ENCODE measurements at regions of chr12 and their contacts with region 1.

Region 1: GRCh38 chr12:106302401-106303201 is at the start of gene TCP11L2:
- DNase-seq: peak; percentile 83
- H3K4me3 Mint-ChIP-seq: peak within 1 kb of the TSS; percentile 93
- H3K27ac Mint-ChIP-seq: peak within 1 kb of the TSS; percentile 100
- H3K4me1 Mint-ChIP-seq: peaks cover 49% of the 10 kb centered on the region
- H3K27me3 Mint-ChIP-seq: no peaks in the 10 kb centered on the region
- total RNA-seq, gene TCP11L2: 4.0 and 4.3 TPM in 2 replicates

Region 2: GRCh38 chr12:105235732-105236476 is 1066.7 kb before region 1 on chr12 and contains the start of gene APPL2:
- intact Hi-C with region 1: loop called (anchors 2 kb)
- DNase-seq: peak; percentile 71
- H3K4me3 Mint-ChIP-seq: peak within 1 kb of the TSS; percentile 91
- H3K27ac Mint-ChIP-seq: peak within 1 kb of the TSS; percentile 77
- H3K4me1 Mint-ChIP-seq: peaks cover 32% of the 10 kb centered on the region
- H3K27me3 Mint-ChIP-seq: peaks cover 3% of the 10 kb centered on the region
- total RNA-seq, gene APPL2: 22.9 and 27.8 TPM in 2 replicates

Region 3: DNA sequence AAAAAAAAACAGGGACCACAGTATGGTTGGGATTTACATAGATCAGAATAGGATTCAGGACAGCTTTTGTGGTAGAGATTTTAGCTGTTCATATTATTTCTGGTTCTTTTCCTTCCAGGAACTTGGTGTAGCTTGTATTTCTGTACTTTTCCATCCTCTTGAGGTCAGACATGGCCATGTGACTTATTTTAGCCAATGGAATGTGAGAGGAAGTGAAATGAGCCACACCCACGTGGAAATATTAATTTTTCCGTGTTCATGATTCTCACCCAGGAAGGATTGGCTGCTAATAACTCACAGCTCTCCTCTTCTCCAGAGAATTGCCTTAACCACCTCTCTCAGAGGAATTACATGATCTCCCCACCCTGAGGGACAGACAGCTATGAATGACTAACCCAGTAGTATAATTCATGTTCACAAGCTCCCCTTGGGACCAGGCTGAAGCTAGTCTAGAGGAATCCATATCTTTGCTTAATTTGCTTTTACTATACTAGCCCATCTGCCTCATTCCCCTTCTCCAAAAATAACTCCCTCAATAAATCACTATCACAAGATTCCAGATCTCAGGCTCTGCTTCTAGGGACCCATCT is 504.2 kb before region 1 on chr12:
- intact Hi-C with region 1: no loop called
- DNase-seq: no peak
- H3K4me3 Mint-ChIP-seq: no peak overlapping the region
- H3K27ac Mint-ChIP-seq: no peak overlapping the region
- H3K4me1 Mint-ChIP-seq: no peaks in the 10 kb centered on the region
- H3K27me3 Mint-ChIP-seq: no peaks in the 10 kb centered on the region

Region 4: GRCh38 chr12:106223485-106224354 is 78.9 kb before region 1 on chr12:
- intact Hi-C with region 1: loop called (anchors 5 kb)
- DNase-seq: peak; percentile 59
- H3K4me3 Mint-ChIP-seq: no peak overlapping the region
- H3K27ac Mint-ChIP-seq: no peak overlapping the region
- H3K4me1 Mint-ChIP-seq: peaks cover 29% of the 10 kb centered on the region
- H3K27me3 Mint-ChIP-seq: peaks cover 3% of the 10 kb centered on the region

Region 5: GRCh38 chr12:106774005-106774807 is 471.6 kb after region 1 on chr12 and contains the start of gene RIC8B:
- intact Hi-C with region 1: loop called (anchors 1 kb)
- DNase-seq: peak; percentile 77
- H3K4me3 Mint-ChIP-seq: peak within 1 kb of the TSS; percentile 100
- H3K27ac Mint-ChIP-seq: peak within 1 kb of the TSS; percentile 98
- H3K4me1 Mint-ChIP-seq: peaks cover 37% of the 10 kb centered on the region
- H3K27me3 Mint-ChIP-seq: no peaks in the 10 kb centered on the region
- total RNA-seq, gene RIC8B: 11.4 and 12.3 TPM in 2 replicates

Region 6: GRCh38 chr12:106955377-106956047 is 652.9 kb after region 1 on chr12 and contains the start of gene TMEM263:
- intact Hi-C with region 1: loop called (anchors 1 kb)
- DNase-seq: peak; percentile 90
- H3K4me3 Mint-ChIP-seq: peak within 1 kb of the TSS; percentile 97
- H3K27ac Mint-ChIP-seq: peak within 1 kb of the TSS; percentile 94
- H3K4me1 Mint-ChIP-seq: peaks cover 21% of the 10 kb centered on the region
- H3K27me3 Mint-ChIP-seq: peaks cover 3% of the 10 kb centered on the region
- total RNA-seq, gene TMEM263: 25.5 and 25.9 TPM in 2 replicates

Region 7: DNA sequence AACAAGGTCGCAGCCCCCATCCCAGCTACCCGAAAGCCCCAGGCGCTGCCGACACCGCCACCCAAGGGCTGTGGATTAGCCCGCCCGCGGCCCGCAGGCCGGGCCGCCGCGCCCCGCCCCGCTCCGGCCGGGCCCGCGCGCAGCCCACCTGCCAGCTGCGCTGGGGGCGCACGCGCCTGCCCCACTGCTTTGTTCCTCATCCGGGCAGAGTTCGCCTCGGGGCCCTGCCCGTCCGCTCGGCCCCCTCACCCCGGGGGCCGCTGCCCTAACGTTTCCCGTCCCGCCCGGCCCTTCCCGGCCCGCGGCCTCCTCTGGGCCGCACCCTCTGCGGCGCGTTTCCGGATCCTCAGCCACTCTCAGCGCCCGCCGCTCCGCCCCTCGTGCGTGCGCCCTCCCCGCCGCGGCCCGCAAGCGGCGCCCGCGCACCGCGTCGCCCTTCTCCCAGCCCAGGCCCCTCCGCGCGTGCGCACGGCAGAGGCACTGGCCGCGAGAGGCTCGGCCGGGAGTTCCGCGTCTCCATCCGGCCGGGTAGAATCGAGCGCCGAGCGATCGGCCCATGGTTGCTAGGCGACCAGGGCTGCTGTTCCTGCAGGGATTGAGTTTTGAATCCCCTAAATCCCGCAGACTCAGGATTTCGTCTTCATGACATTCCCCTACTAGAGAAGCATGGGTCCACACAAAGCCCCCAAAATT is 1458.4 kb after region 1 on chr12 and contains the start of gene PRDM4:
- intact Hi-C with region 1: loop called (anchors 5 kb)
- DNase-seq: peak; percentile 91
- H3K4me3 Mint-ChIP-seq: peak within 1 kb of the TSS; percentile 92
- H3K27ac Mint-ChIP-seq: peak within 1 kb of the TSS; percentile 89
- H3K4me1 Mint-ChIP-seq: peaks cover 40% of the 10 kb centered on the region
- H3K27me3 Mint-ChIP-seq: peaks cover 3% of the 10 kb centered on the region
- total RNA-seq, gene PRDM4: 28.1 and 30.2 TPM in 2 replicates

Measured in activated T-helper 1 cell treated with anti-CD3 and anti-CD28 coated beads, Interleukin-12 subunit alpha, Interleukin-12 subunit beta, Interleukin-2, Interleukin-4 antibody, amounts not matched to agents 30 ng/mL and 10 ng/mL and 1 ng/mL, durations not matched to agents 14 hours and 24 hours and 36 hours (primary cell).